ENCODE measurements at regions of chr13 and their contacts with region 1.

Region 1: GRCh38 chr13:70310396-70311119 is 202.3 kb upstream of the KLHL1 start:
- H3K4me3 ChIP-seq: no peak overlapping the region
- H3K27ac ChIP-seq: no peak overlapping the region
- H3K4me1 ChIP-seq: no peaks in the 10 kb centered on the region
- CTCF ChIP-seq: no peak

Region 2: GRCh38 chr13:70098669-70099068 is 211.9 kb before region 1 on chr13:
- CTCF ChIA-PET with region 1: interaction called, 15 read pairs
- POLR2A ChIA-PET with region 1: no interaction called
- H3K4me3 ChIP-seq: no peak overlapping the region
- H3K27ac ChIP-seq: no peak overlapping the region
- H3K4me1 ChIP-seq: no peaks in the 10 kb centered on the region
- CTCF ChIP-seq: no peak

Region 3: GRCh38 chr13:70297189-70297616 is 13.4 kb before region 1 on chr13:
- CTCF ChIA-PET with region 1: no interaction called
- POLR2A ChIA-PET with region 1: no interaction called
- H3K4me3 ChIP-seq: no peak overlapping the region
- H3K27ac ChIP-seq: no peak overlapping the region
- H3K4me1 ChIP-seq: no peaks in the 10 kb centered on the region
- CTCF ChIP-seq: no peak